GM18951 (cell line): ENCODE measurements at regions of chr17 and their contacts with region 1.

Region 1: DNA sequence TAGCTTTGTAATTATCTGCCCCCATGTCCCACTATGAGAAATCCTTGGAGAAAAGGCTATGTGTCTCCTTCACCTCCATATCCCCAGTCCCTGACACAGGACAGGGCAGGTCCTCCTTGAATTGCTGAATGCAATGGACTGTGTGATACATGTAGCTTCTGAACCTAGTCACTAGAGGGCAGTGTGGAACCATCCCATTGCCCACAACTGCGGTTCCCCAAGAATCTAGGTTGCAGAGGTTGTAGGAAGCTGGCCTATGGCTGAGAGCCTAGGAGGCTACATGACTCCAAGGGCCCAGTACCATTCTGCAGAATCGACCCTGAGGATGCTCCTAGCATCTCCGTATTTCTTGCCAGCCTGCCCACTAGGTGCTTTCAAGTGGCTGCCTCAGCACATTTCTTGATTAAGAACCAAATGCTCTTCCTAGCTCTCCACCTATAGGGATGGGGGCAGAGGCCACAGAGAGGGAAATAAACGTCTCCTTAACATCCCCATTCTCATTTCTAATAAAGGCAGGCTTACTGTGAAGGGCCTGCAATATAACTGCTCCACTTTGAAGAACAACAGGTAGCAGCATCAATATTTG is 394.0 kb downstream of the CA10 start:
- POLR2A ChIP-seq: no peak

Region 2: DNA sequence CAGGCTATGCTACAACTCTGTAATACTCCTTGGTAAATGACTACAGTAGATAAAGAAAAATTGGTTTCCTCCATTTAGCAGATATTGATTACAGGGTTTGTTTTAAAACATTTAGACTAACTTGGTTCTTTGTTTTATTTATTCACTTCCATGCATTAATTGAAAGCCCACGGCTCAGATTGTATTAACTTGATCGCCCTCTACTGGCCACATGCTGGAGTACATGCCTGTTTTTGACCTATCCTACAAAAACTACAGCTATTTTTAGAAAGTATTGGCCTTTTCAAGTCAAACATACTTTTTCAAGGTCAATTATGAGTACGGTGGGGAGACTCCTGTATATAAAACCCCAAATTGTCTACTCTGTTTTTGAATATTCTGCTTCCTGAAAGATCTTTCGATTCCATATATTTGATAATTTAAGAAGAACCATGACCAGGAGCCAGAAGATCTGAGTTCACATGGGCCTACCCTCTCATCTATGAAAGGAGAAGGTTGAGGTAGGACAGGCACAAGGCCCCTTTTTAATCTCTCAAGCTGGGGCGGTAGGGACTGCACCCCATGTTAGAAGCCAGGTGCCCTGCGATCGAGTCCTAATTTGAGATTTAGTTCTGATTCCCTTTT is 342.3 kb after region 1 on chr17:
- in situ Hi-C with region 1: loop called (anchors 25 kb)
- POLR2A ChIP-seq: no peak